HepG2 (cell line): ENCODE measurements at regions of chr20 and their contacts with region 1.

Region 1: GRCh38 chr20:50415516-50416113 is 94.6 kb upstream of the PTPN1 start:
- DNase-seq: peak; percentile 86
- ATAC-seq: peak; percentile 86
- H3K4me3 ChIP-seq: peak overlapping the region; percentile 16 to 58 (median 40)
- H3K27ac ChIP-seq: peak overlapping the region; percentile 63
- H3K4me1 ChIP-seq: peaks cover 88% of the 10 kb centered on the region
- H3K27me3 ChIP-seq: no peaks in the 10 kb centered on the region
- CTCF ChIP-seq: peak; percentile 28
- EP300 ChIP-seq: no peak
- POLR2A ChIP-seq: peak; percentile 40 to 67
- RAD21 ChIP-seq: peak; percentile 35

Region 2: GRCh38 chr20:50403565-50404426 is 11.8 kb before region 1 on chr20:
- CTCF ChIA-PET with region 1: no interaction called
- POLR2A ChIA-PET with region 1: interaction called, 79 read pairs
- in situ Hi-C with region 1: no loop called
- intact Hi-C with region 1: no loop called
- DNase-seq: no peak
- ATAC-seq: no peak
- H3K4me3 ChIP-seq: no peak overlapping the region
- H3K27ac ChIP-seq: peak overlapping the region; percentile 85
- H3K4me1 ChIP-seq: peaks cover 100% of the 10 kb centered on the region
- H3K27me3 ChIP-seq: no peaks in the 10 kb centered on the region
- CTCF ChIP-seq: no peak
- EP300 ChIP-seq: 0 out of 4 replicates have a peak, but pooled peaks of 1 of the 2 experiments have one; percentile 7
- POLR2A ChIP-seq: no peak
- RAD21 ChIP-seq: no peak

Region 3: DNA sequence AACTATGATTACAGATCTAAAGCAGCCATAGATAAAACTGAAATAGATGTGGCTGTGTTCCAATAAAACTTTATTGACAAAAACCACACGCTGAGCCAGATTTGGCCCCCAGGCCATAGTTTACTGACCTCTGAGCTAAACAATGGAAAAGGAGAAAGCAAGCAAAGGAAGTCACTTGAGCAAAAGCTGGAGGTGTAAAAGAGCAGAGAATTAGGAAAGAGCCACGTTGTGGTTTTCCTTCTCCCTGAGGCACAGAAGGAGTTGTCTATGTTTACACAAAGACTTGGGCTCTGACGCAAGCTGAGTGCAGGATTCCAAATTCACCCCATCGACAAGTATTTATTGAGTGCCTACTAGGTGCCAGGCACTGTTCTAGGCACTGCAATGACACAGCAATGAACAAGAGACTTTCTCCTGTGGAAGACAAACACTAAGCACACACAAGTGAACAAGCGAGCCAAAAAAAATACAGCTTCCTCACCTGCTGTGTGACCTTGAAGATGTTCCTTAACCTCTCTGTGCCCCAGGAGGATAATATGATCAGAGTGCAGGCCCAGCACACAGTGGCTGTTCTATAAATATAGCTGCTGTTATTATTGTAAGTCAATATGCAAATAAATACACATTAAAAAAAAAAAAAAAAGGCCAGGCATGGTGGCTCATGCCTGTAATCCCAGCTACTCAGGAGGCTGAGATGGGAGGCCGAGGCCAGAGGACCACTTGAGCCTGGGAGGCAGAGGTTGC is 19.2 kb after region 1 on chr20:
- CTCF ChIA-PET with region 1: no interaction called
- POLR2A ChIA-PET with region 1: interaction called, 3 read pairs
- in situ Hi-C with region 1: no loop called
- intact Hi-C with region 1: loop called (anchors 1 kb)
- DNase-seq: peak; percentile 68
- ATAC-seq: no peak
- H3K4me3 ChIP-seq: no peak overlapping the region
- H3K27ac ChIP-seq: peak overlapping the region; percentile 5
- H3K4me1 ChIP-seq: peaks cover 91% of the 10 kb centered on the region
- H3K27me3 ChIP-seq: no peaks in the 10 kb centered on the region; a peak in 1 of 5 replicates
- CTCF ChIP-seq: no peak
- EP300 ChIP-seq: peak in 1 of 2 experiments; percentile 60; a peak in 2 of 4 replicates
- POLR2A ChIP-seq: no peak
- RAD21 ChIP-seq: no peak

Region 4: GRCh38 chr20:50460460-50461267 is 45.0 kb after region 1 on chr20:
- CTCF ChIA-PET with region 1: no interaction called
- POLR2A ChIA-PET with region 1: interaction called, 13 read pairs
- in situ Hi-C with region 1: no loop called
- intact Hi-C with region 1: no loop called
- DNase-seq: peak; percentile 91
- ATAC-seq: peak; percentile 85
- H3K4me3 ChIP-seq: peak overlapping the region; percentile 15 to 64 (median 35); a peak in 5 of 6 replicates
- H3K27ac ChIP-seq: peak overlapping the region; percentile 45
- H3K4me1 ChIP-seq: peaks cover 89% of the 10 kb centered on the region
- H3K27me3 ChIP-seq: no peaks in the 10 kb centered on the region
- CTCF ChIP-seq: peak; percentile 100
- EP300 ChIP-seq: peak in 1 of 2 experiments; percentile 60; a peak in 3 of 4 replicates
- POLR2A ChIP-seq: peak in 1 of 2 experiments; percentile 28; a peak in 1 of 4 replicates
- RAD21 ChIP-seq: peak; percentile 100